ENCODE measurements at regions of chr11 and their contacts with region 1.

Region 1: DNA sequence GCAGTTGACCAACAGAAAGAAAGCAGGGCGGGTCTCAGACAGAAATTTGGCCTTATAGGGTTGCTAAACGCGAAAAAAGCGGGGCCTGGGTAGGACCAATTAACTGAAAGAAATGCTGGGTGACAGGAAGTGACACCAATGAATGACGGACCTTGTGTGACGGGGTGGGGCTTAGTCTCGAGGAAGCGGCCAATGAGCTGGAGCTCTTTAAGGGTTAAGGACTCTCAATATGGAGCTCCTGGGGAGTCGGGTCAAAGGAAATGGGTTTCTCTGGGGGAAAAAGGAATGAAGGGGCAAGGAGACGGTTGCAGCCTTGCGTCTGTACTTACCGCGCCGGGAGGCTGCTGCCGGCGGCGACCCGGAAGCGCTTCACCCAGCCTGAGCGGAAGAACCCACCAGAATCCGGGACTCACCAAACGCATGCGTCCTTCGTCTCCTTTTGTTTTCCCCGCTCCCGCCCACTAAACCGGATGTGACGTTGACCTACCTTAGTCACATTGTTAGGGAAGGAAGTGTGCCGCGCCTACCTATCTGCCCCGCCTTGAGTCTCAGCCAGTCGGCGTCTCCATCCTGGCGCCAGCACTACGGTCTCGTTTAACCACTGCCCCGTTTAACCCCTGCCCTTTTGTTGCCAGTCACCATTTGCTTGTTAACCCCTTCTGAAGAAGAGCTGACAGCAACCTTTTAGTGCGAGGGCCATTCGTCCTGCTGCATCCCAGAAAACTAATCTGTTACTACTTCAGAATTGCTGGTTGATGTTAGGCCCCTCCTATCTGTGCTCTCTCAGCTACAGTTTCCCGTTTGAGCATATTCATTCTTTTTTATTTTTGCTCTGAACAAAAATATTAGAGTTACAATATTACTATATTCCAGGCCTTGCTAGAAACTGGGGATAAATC is at the start of gene ANAPC15:
- DNase-seq: peak; percentile 83 to 100 (median 99)
- ATAC-seq: peak; percentile 91
- H3K4me3 ChIP-seq: peak within 1 kb of the TSS; percentile 85
- H3K4me3 Mint-ChIP-seq: peak within 1 kb of the TSS; percentile 73 to 100 (median 96)
- H3K27ac ChIP-seq: peak within 1 kb of the TSS; percentile 92
- H3K27ac Mint-ChIP-seq: peak within 1 kb of the TSS; percentile 97 to 100 (median 98)
- H3K4me1 ChIP-seq: peaks cover 12 to 14% of the 10 kb centered on the region in 2 donors
- H3K4me1 Mint-ChIP-seq: peaks cover 12 to 29% (median 25%) of the 10 kb centered on the region in 7 donors
- H3K27me3 ChIP-seq: no peaks in the 10 kb centered on the region
- H3K27me3 Mint-ChIP-seq: peaks cover 0 to 6% (median 0%) of the 10 kb centered on the region in 5 donors
- total RNA-seq, gene ANAPC15: 43.0 to 59.6 (median 44.1) TPM

Region 2: GRCh38 chr11:71787098-71787823 is 325.3 kb before region 1 on chr11:
- CTCF ChIA-PET with region 1: no interaction called
- POLR2A ChIA-PET with region 1: no interaction called
- intact Hi-C with region 1: loop called in 1 of 2 experiments (anchors 1 kb)
- DNase-seq: peak; percentile 86 to 96 (median 94)
- ATAC-seq: peak; percentile 98
- H3K4me3 ChIP-seq: peak overlapping the region; percentile 86
- H3K4me3 Mint-ChIP-seq: peak overlapping the region; percentile 95 to 100 (median 98)
- H3K27ac ChIP-seq: peak overlapping the region; percentile 93
- H3K27ac Mint-ChIP-seq: peak overlapping the region; percentile 88 to 99 (median 98)
- H3K4me1 ChIP-seq: no peaks in the 10 kb centered on the region
- H3K4me1 Mint-ChIP-seq: peaks cover 0 to 20% (median 12%) of the 10 kb centered on the region in 7 donors
- H3K27me3 ChIP-seq: no peaks in the 10 kb centered on the region
- H3K27me3 Mint-ChIP-seq: peaks cover 0 to 5% (median 0%) of the 10 kb centered on the region in 5 donors